SK-N-SH (cell line): ENCODE measurements at regions of chr12 and their contacts with region 1.

Region 1: DNA sequence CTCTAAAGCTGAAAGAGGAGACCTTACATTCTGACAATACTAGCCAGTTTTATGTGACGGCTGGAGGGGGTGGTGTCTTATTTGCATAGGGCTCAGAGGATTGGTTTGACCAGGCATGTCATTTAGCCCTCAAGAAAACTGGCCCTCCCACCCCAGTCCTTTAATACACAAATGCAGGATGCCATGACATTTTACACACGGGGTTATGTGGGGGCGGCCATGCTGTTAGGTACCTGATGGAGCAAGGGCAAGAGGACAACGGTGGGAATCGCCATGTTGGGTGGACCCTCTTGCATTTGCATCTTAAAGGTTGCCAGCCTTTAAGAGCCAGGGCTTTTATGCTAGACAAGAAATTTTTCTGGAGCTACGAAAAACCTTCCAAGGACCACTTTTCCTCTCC is 23.3 kb downstream of the MDM2 start:
- DNase-seq: no peak
- H3K4me3 ChIP-seq: no peak overlapping the region
- H3K27ac ChIP-seq: peak overlapping the region in 1 of 2 experiments; percentile 15; a peak in 1 of 4 replicates
- H3K4me1 ChIP-seq: peaks cover 0 to 12% of the 10 kb centered on the region in 2 experiments; a peak in 2 of 4 replicates
- H3K27me3 ChIP-seq: no peaks in the 10 kb centered on the region
- CTCF ChIP-seq: no peak
- EP300 ChIP-seq: no peak
- RAD21 ChIP-seq: no peak

Region 2: DNA sequence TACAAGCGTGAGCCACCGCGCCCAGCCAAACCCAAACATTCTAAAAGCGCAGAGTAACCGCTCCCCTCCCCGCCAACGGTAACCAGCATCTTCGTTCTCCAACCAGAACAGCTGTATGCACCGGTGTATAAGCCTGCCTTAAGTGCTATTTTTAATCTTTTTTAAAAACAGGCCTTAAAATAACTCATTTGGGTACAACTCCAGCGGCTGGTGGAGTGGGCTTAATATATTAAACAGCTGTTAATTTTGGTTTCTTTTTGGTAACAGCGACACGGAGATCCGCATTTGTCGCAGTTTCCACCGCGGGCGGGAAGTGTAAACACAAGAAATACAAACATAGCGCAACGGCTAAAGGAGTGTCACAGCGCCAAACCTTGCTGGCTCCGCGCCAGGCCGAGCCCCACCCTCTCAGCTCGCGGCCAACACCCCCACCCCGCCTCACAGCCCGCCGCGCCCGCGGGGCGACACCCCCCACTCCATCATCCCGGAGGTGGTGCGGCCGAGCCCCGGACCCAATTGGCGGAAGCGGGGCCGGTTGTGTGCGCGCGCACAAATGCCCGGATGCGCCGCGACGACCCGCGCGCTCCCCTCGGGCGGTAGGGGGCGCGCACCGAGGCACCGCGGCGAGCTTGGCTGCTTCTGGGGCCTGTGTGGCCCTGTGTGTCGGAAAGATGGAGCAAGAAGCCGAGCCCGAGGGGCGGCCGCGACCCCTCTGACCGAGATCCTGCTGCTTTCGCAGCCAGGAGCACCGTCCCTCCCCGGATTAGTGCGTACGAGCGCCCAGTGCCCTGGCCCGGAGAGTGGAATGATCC is 23.5 kb before region 1 on chr12 and contains the start of gene MDM2:
- CTCF ChIA-PET with region 1: interaction called, 31 read pairs
- POLR2A ChIA-PET with region 1: no interaction called
- DNase-seq: peak; percentile 99
- H3K4me3 ChIP-seq: peak within 1 kb of the TSS; percentile 82 to 99
- H3K27ac ChIP-seq: peak within 1 kb of the TSS; percentile 96 to 98
- H3K4me1 ChIP-seq: peaks cover 0 to 2% of the 10 kb centered on the region in 2 experiments; a peak in 3 of 4 replicates
- H3K27me3 ChIP-seq: no peaks in the 10 kb centered on the region
- CTCF ChIP-seq: peak; percentile 68
- EP300 ChIP-seq: no peak
- RAD21 ChIP-seq: no peak
- polyA plus RNA-seq, gene MDM2: 16.9 and 21.5 TPM in 2 replicates

Region 3: DNA sequence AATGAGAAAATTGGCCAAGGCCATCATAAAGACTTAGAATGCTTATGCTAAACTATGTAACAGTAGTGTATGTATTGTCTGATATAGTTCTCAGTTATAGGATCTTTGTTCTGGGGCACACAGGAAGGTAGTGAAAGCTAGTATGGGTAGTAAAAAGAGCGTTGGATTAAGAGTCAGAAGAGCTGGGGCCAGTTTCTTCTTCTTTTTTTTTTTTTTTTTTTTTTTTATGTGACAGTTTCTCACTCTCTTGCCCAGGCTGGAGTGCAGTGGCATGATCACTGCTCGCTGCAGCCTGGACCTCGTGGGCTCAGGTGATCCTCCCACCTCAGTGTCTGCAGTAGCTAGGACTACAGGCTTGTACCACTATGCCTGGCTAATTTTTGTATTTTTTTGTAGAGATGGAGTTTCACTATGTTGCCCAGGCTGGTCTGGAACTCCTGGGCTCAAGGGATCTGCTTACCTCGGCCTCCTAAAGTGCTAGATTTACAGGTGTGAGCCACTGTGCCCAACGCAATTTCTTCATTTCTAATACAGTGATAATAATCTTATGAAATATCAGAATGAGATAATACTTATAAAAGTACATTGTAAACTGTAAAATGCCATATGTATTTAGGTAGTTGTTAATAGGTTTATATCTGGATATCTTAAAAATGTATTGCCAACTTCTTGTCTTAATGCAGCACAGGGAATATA is 15.9 kb before region 1 on chr12:
- CTCF ChIA-PET with region 1: interaction called, 31 read pairs
- POLR2A ChIA-PET with region 1: no interaction called
- DNase-seq: no peak
- H3K4me3 ChIP-seq: peak overlapping the region in 1 of 2 experiments; percentile 42; a peak in 2 of 4 replicates
- H3K27ac ChIP-seq: no peak overlapping the region
- H3K4me1 ChIP-seq: peaks cover 2 to 12% of the 10 kb centered on the region in 2 experiments; a peak in 3 of 4 replicates
- H3K27me3 ChIP-seq: no peaks in the 10 kb centered on the region
- CTCF ChIP-seq: no peak
- EP300 ChIP-seq: no peak
- RAD21 ChIP-seq: no peak

Region 4: GRCh38 chr12:68844788-68845695 is 13.8 kb after region 1 on chr12:
- CTCF ChIA-PET with region 1: interaction called, 30 read pairs
- POLR2A ChIA-PET with region 1: no interaction called
- DNase-seq: no peak
- H3K4me3 ChIP-seq: no peak overlapping the region
- H3K27ac ChIP-seq: no peak overlapping the region
- H3K4me1 ChIP-seq: no peaks in the 10 kb centered on the region
- H3K27me3 ChIP-seq: no peaks in the 10 kb centered on the region
- CTCF ChIP-seq: no peak
- EP300 ChIP-seq: no peak
- RAD21 ChIP-seq: no peak